Activated CD4-positive, alpha-beta T cell treated with anti-CD3 and anti-CD28 coated beads, Interleukin-2, amount 10 ng/mL, durations not matched to agents 24 days and 14 days (primary cell): ENCODE measurements at regions of chr7 and their contacts with region 1.

Region 1: GRCh38 chr7:24965831-24966709 is 13.9 kb downstream of the OSBPL3 start:
- DNase-seq: peak; percentile 88
- H3K4me3 Mint-ChIP-seq: peak overlapping the region; percentile 75
- H3K27ac Mint-ChIP-seq: peak overlapping the region; percentile 84
- H3K4me1 Mint-ChIP-seq: peaks cover 76% of the 10 kb centered on the region
- H3K27me3 Mint-ChIP-seq: no peaks in the 10 kb centered on the region

Region 2: DNA sequence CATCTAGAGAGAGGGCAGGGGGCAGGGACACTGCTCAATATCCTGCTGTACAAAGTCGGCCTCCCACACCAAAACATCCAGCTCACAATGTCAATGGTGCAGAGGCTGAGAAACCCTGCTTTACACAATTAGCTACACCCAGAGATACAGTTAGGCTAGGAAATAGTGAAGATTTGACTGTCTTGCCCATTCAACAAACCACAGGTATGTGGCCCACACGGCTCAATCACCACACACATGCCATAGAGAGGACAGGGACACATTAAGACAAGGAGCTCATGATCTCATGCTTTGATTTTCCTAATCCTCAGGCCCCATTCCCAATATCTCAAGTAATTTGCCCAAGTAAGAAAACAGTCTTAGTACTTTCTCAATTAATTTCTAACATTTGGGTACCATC is 96.5 kb before region 1 on chr7:
- intact Hi-C with region 1: loop called (anchors 1 kb)
- DNase-seq: no peak
- H3K4me3 Mint-ChIP-seq: no peak overlapping the region
- H3K27ac Mint-ChIP-seq: peak overlapping the region; percentile 2
- H3K4me1 Mint-ChIP-seq: peaks cover 43% of the 10 kb centered on the region
- H3K27me3 Mint-ChIP-seq: no peaks in the 10 kb centered on the region

Region 3: DNA sequence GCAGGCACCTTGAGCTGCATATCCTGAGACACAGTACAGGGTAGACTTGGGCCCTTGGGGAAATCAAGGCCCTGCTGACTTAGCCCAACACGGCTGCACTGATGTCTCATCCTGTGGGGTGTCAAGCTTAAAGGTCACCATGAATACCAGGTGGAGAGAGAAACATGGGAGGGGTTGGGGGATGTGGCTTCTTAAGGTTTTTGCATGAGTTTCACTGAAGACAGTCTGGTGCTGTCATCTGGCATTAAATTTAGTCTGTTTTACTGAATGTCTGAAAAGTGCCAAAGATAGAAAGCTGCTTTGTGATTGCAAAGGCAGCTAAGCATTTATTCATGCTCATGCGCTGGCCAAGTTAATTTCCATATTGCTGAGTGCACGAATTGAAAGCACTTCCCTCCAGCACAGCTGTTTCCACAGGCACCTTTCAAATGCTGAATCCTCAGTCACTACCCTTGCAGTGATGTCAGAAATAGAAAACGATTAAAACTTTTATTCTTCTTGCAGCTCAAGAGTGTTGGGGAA is 88.2 kb before region 1 on chr7:
- intact Hi-C with region 1: loop called (anchors 1 kb)
- DNase-seq: peak; percentile 76
- H3K4me3 Mint-ChIP-seq: peak overlapping the region; percentile 73
- H3K27ac Mint-ChIP-seq: peak overlapping the region; percentile 84
- H3K4me1 Mint-ChIP-seq: peaks cover 47% of the 10 kb centered on the region
- H3K27me3 Mint-ChIP-seq: no peaks in the 10 kb centered on the region

Region 4: DNA sequence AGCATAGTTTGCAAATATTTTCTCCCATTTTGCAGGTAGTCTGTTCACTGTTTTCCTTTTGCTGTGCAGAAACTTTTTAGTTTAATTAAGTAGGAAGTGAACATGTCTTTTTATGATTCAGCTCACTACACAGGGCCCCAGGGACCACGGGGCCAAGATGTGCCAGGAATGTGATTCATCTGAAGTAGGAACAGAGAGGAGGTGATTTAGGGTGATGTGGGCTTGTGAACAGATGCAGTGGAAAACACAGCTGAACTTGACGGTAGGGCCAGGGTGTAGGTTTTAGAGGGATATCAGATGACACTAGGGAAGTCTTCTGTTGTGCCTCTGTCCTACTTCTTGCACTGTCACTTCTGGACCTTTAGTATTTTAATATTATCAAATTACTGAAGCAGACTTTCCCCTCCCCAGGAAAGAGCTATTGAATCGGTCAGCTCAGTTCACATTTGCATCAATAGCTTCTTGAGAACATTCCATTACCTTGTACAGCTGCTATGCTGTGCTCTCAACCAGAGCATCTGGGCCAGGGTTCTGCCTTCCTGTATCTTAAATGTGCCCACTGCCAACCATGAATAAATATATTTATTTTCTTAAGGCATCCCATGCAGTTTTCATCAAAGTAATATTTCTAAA is 83.0 kb before region 1 on chr7:
- intact Hi-C with region 1: loop called (anchors 1 kb)
- DNase-seq: no peak
- H3K4me3 Mint-ChIP-seq: peak overlapping the region; percentile 25
- H3K27ac Mint-ChIP-seq: peak overlapping the region; percentile 75
- H3K4me1 Mint-ChIP-seq: peaks cover 72% of the 10 kb centered on the region
- H3K27me3 Mint-ChIP-seq: no peaks in the 10 kb centered on the region

Region 5: GRCh38 chr7:24907311-24907886 is 58.7 kb before region 1 on chr7:
- intact Hi-C with region 1: loop called (anchors 1 kb)
- DNase-seq: peak; percentile 84
- H3K4me3 Mint-ChIP-seq: no peak overlapping the region
- H3K27ac Mint-ChIP-seq: no peak overlapping the region
- H3K4me1 Mint-ChIP-seq: peaks cover 33% of the 10 kb centered on the region
- H3K27me3 Mint-ChIP-seq: no peaks in the 10 kb centered on the region

Region 6: GRCh38 chr7:24921362-24921679 is 44.7 kb before region 1 on chr7:
- intact Hi-C with region 1: loop called (anchors 1 kb)
- DNase-seq: peak; percentile 79
- H3K4me3 Mint-ChIP-seq: peak overlapping the region; percentile 64
- H3K27ac Mint-ChIP-seq: peak overlapping the region; percentile 92
- H3K4me1 Mint-ChIP-seq: peaks cover 88% of the 10 kb centered on the region
- H3K27me3 Mint-ChIP-seq: no peaks in the 10 kb centered on the region

Region 7: DNA sequence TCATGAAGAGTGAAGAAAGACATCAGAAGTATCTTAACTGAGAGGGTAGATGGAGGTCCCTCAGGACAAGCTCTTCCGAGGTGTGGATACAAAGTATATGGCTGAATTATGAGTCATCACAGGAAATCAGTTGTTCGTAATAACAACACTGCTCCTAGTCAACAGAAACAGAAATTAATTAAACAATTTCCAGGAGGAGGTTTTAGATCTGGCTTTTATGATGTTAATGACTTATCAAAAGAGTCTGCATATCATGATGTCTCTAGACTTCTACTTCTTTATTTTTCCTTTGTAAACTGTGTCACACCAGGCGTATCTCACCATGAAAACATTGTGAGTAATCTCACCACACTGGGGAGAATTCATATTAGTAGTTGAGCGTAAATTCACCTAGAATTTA is 17.3 kb before region 1 on chr7:
- intact Hi-C with region 1: loop called (anchors 2 kb)
- DNase-seq: no peak
- H3K4me3 Mint-ChIP-seq: no peak overlapping the region
- H3K27ac Mint-ChIP-seq: peak overlapping the region; percentile 29
- H3K4me1 Mint-ChIP-seq: peaks cover 50% of the 10 kb centered on the region
- H3K27me3 Mint-ChIP-seq: no peaks in the 10 kb centered on the region

Region 8: GRCh38 chr7:25028370-25029021 is 62.4 kb after region 1 on chr7:
- intact Hi-C with region 1: no loop called
- DNase-seq: peak; percentile 82
- H3K4me3 Mint-ChIP-seq: peak overlapping the region; percentile 48
- H3K27ac Mint-ChIP-seq: peak overlapping the region; percentile 87
- H3K4me1 Mint-ChIP-seq: peaks cover 45% of the 10 kb centered on the region
- H3K27me3 Mint-ChIP-seq: peaks cover 10% of the 10 kb centered on the region

Region 9: DNA sequence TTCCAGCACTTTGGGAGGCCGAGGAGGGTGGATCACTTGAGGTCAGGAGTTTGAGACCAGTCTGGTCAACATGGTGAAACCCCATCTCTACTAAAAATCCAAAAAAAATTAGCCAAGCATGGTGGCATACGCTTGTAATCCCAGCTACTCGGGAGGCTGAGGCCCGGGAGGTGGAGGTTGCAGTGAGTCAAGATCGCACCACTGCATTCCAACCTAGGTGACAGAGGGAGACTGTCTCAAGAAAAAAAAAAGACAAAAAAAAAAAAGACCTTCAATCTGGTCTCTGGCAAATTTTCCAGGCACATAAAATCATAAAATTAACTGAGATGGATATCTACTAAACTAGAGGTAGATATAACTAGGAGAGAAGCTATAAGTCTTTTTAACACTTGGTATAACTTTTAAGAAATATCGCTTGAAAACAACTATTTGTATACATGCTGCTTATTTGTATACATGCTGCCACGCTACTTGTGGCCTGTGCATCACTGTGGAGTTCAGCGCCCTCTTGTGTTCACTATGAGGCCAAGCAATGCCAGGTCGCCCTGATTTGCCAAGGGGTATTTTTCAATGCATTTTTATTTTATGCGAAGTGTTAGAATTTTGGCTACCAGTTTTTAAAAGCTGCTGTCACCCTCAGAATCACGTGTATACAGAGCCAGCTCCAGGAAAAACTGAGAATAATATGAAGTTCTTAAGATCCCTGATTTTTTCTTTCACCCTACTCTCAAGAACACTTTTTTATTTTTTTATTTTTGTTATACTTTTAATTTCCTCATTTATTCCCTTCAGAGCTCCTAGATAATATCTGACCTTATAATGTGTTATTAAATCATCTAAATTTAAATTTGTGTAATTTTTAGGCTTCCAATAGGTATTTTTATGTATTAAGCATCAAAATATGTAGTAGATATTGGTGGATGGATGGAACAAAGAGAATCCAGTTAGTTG is 132.3 kb after region 1 on chr7:
- intact Hi-C with region 1: no loop called
- DNase-seq: peak; percentile 88
- H3K4me3 Mint-ChIP-seq: no peak overlapping the region
- H3K27ac Mint-ChIP-seq: no peak overlapping the region
- H3K4me1 Mint-ChIP-seq: peaks cover 10% of the 10 kb centered on the region
- H3K27me3 Mint-ChIP-seq: peaks cover 7% of the 10 kb centered on the region